ENCODE measurements at regions of chr13 and their contacts with region 1.

Region 1: GRCh38 chr13:43303033-43303729 is 279.8 kb downstream of the DNAJC15 start:
- DNase-seq: peak; percentile 62 to 82 (median 78)
- ATAC-seq: peak; percentile 87
- H3K4me3 ChIP-seq: no peak overlapping the region
- H3K27ac ChIP-seq: no peak overlapping the region
- H3K4me1 ChIP-seq: peaks cover 16% of the 10 kb centered on the region
- H3K27me3 ChIP-seq: no peaks in the 10 kb centered on the region
- CTCF ChIP-seq: peak; percentile 47 to 90 (median 72)
- POLR2A ChIP-seq: no peak

Region 2: GRCh38 chr13:43804461-43805070 is 501.4 kb after region 1 on chr13:
- intact Hi-C with region 1: loop called (anchors 10 kb)
- DNase-seq: peak in 2 of 4 donors; percentile 15 to 29
- ATAC-seq: no peak
- H3K4me3 ChIP-seq: no peak overlapping the region
- H3K27ac ChIP-seq: no peak overlapping the region
- H3K4me1 ChIP-seq: no peaks in the 10 kb centered on the region
- H3K27me3 ChIP-seq: no peaks in the 10 kb centered on the region
- CTCF ChIP-seq: peak; percentile 22 to 69 (median 56)
- POLR2A ChIP-seq: no peak

Measured in body of pancreas (tissue), 4 donors.